CD8-positive, alpha-beta T cell (primary cell): ENCODE measurements at regions of chr17 and their contacts with region 1.

Region 1: DNA sequence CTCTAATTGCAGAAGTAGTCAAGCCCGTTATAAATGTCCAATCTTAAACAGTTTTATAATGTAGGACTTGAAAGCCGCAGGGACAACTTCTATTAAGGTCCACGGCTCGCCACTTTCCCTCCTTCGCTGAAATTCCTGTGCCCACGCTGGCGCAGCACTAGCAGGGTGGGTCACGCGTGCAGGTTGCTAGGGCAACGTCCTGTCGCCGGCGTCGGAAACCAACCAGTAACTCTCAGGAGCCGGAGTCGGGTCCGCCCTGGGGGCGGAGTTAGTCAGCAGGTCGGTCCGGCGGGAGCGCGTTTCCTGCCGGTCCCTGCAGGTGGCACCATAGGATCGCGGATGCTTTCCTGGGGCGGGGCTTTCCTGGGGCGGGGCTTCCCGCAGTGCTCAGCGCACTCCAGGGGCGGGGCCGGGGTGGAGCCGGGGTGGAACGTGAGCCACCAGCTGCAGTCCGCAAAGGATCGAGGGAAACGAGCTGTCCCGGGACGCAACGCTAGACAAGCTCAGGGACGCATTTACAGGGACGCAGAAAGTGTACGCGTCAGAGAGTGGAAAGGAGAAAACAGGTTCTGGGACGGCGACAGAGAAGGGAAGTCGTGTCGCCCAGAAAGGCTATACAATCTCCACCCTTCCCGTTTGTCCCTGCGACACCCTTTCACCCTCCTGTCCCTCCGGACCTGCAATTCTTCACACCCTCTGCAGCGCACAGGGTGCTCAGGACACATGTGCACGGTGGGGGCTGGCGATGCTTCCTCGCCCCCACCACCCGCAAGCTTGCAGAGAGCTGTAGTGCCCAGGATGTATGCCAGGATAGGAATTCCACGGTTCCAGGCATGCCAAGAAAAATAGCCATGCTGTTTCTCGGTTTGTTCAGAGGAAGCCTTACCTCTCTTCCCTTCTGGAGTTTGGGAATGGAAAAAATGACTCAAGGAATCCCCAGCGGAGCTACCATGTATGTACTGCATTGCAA is 12.4 kb downstream of the COPZ2 start:
- DNase-seq: peak; percentile 96 to 99 (median 97)
- ATAC-seq: peak; percentile 91
- H3K4me3 ChIP-seq: peak overlapping the region; percentile 57 to 60
- H3K4me3 Mint-ChIP-seq: peak overlapping the region; percentile 84
- H3K27ac ChIP-seq: peak overlapping the region in 1 of 2 experiments; percentile 48
- H3K27ac Mint-ChIP-seq: peak overlapping the region; percentile 83
- H3K4me1 ChIP-seq: peaks cover 35% of the 10 kb centered on the region
- H3K4me1 Mint-ChIP-seq: peaks cover 23% of the 10 kb centered on the region
- H3K27me3 ChIP-seq: peaks cover 6 to 29% of the 10 kb centered on the region in 2 experiments
- H3K27me3 Mint-ChIP-seq: peaks cover 46% of the 10 kb centered on the region
- CTCF ChIP-seq: peak; percentile 70

Region 2: DNA sequence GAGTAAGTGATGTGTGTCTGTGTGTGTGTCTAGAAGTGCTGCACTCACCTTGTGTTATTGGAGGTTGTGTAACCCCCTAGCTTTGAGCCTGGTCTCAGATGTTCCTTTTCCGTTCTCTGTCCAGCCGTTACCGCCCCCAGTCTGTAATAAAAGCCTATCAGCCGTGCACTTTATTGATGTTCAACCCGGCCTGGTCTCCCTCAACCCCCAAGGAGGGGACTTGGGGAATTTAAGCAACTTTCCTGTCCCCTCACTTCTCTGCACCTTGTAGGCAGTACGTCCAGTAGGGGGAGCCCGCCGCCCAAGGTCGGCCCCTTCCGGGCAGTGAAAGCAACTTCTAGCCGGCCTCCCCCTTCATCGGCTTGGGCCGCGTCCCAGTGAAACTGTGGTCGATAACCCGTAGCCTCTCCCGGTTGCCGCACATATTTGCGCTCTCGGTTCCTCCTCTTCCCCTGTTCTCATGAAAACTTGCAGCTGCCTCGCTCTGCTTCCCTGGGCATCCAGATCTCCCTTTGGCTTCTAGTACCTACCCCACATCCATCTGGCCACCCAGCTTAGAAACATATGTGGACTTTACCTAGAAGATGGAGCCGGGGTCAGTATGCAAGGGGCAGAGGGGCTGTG is 76.0 kb before region 1 on chr17:
- CTCF ChIA-PET with region 1: interaction called, 4 read pairs
- POLR2A ChIA-PET with region 1: no interaction called
- intact Hi-C with region 1: loop called in 1 of 2 experiments (anchors 2 kb)
- DNase-seq: peak; percentile 47 to 88 (median 79)
- ATAC-seq: peak; percentile 53
- H3K4me3 ChIP-seq: peak overlapping the region; percentile 26 to 36
- H3K4me3 Mint-ChIP-seq: peak overlapping the region; percentile 82
- H3K27ac ChIP-seq: peak overlapping the region in 1 of 2 experiments; percentile 28
- H3K27ac Mint-ChIP-seq: peak overlapping the region; percentile 81
- H3K4me1 ChIP-seq: peaks cover 51% of the 10 kb centered on the region
- H3K4me1 Mint-ChIP-seq: peaks cover 46% of the 10 kb centered on the region
- H3K27me3 ChIP-seq: no peaks in the 10 kb centered on the region
- H3K27me3 Mint-ChIP-seq: no peaks in the 10 kb centered on the region
- CTCF ChIP-seq: peak; percentile 78

Region 3: DNA sequence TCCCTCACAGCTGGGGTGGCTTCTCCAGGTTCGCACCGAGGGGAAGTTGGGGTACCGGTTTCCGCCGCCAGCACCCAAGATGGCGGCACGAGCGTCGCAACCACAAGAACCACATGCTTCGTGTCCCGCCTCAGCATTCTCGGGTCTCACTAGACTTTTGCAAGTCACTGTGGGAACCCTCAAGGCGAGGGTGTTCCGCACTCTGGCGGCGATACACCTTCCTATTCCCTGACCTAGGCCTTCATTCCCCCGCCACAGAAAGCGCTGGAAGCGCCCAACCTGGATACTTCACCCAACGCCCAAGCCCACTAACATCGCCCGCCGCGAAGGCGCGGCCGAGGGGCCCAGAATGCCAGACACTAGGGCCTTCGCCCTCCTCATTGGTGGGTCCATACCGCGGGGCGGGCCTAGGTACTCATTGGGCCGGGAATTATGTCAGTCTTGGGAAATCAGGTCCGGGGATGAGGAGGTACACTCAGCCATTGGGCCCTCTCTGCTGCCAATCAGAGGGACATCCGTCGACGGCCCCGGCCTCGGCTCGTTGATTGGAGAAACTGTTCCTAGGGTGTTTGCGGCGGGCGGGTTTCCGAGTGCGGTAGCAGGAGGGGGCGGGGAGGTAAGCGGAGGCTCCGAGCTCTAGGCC is 22.6 kb after region 1 on chr17 and contains the start of gene NFE2L1:
- CTCF ChIA-PET with region 1: interaction called, 20 read pairs
- POLR2A ChIA-PET with region 1: interaction called, 10 read pairs
- intact Hi-C with region 1: loop called (anchors 1 kb)
- DNase-seq: peak; percentile 93 to 99 (median 97)
- ATAC-seq: peak; percentile 96
- H3K4me3 ChIP-seq: peak within 1 kb of the TSS; percentile 69 to 77
- H3K4me3 Mint-ChIP-seq: peak within 1 kb of the TSS; percentile 93
- H3K27ac ChIP-seq: peak within 1 kb of the TSS; percentile 88 to 91
- H3K27ac Mint-ChIP-seq: peak within 1 kb of the TSS; percentile 99
- H3K4me1 ChIP-seq: peaks cover 41% of the 10 kb centered on the region
- H3K4me1 Mint-ChIP-seq: peaks cover 57% of the 10 kb centered on the region
- H3K27me3 ChIP-seq: no peaks in the 10 kb centered on the region
- H3K27me3 Mint-ChIP-seq: no peaks in the 10 kb centered on the region
- CTCF ChIP-seq: no peak
- total RNA-seq, gene NFE2L1: 29.5 to 32.5 TPM

Region 4: DNA sequence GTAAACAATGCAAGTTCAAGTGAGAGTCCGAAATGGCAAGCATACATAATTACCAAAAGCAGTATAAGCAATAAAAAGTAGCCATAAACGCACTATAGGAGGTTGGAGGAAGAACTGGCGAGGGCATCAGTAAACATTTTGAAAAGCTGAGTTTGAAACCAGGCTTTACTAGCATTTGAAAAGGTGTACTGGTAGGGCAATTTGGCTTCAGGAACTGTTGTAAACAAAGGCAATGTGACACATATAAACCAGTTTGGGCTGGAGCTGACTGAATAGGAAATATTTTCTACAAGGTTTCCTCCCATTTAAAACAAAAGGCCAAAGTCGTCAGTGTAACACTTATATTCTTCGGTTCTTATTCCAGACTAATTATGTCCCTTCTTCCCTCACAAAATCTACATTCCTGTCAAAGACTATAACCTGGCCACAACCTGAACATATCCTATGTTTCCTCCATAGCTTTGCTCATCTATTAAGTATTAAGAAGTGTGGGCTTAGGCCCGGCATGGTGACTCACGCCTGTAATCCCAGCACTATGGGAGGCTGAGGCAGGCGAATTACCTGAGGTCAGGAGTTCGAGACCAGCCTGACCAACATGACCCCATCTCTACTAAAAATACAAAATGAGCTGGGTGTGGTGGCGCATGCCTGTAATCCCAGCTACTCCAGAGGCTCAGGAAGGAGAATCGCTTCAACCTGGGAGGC is 68.3 kb after region 1 on chr17:
- CTCF ChIA-PET with region 1: interaction called, 10 read pairs
- POLR2A ChIA-PET with region 1: no interaction called
- intact Hi-C with region 1: no loop called
- DNase-seq: no peak
- ATAC-seq: no peak
- H3K4me3 ChIP-seq: no peak overlapping the region
- H3K4me3 Mint-ChIP-seq: no peak overlapping the region
- H3K27ac ChIP-seq: no peak overlapping the region
- H3K27ac Mint-ChIP-seq: no peak overlapping the region
- H3K4me1 ChIP-seq: no peaks in the 10 kb centered on the region
- H3K4me1 Mint-ChIP-seq: peaks cover 15% of the 10 kb centered on the region
- H3K27me3 ChIP-seq: no peaks in the 10 kb centered on the region
- H3K27me3 Mint-ChIP-seq: no peaks in the 10 kb centered on the region
- CTCF ChIP-seq: no peak

Region 5: DNA sequence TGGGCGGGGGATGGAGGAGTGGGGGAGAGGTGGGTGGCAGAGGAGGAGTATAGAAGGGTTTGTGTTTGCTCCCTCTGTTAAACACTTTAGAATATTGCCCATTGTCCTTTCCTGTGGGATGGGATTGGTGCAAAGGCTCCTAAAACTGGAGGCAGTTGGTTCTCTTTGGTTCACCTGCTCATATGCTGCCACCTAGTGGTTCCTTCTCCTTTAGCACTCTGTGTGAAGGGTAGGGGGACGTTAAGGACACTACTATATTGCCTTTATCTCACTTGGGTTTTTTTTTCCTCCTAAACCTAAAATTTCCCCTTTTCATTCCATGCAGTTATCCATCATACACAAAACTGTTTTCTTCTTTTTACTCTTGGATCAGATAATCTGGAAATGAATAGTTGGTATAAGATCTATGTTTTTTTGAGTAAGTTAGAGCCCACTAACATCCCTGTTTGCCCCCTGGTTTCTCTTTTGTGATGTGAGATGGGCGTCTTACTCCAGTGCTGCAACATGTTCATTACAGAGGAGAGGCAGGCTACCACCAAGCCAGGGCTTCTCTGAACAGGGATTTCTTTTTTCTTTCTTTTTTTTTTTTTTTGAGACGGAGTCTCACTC is 106.1 kb after region 1 on chr17:
- CTCF ChIA-PET with region 1: interaction called, 18 read pairs
- POLR2A ChIA-PET with region 1: interaction called, 3 read pairs
- intact Hi-C with region 1: loop called (anchors 1 kb)
- DNase-seq: peak in 8 of 9 experiments; percentile 29 to 78 (median 55)
- ATAC-seq: peak; percentile 83
- H3K4me3 ChIP-seq: no peak overlapping the region
- H3K4me3 Mint-ChIP-seq: no peak overlapping the region
- H3K27ac ChIP-seq: no peak overlapping the region
- H3K27ac Mint-ChIP-seq: no peak overlapping the region
- H3K4me1 ChIP-seq: no peaks in the 10 kb centered on the region
- H3K4me1 Mint-ChIP-seq: no peaks in the 10 kb centered on the region
- H3K27me3 ChIP-seq: no peaks in the 10 kb centered on the region
- H3K27me3 Mint-ChIP-seq: no peaks in the 10 kb centered on the region
- CTCF ChIP-seq: peak; percentile 83

Region 6: GRCh38 chr17:48194097-48194550 is 168.9 kb after region 1 on chr17:
- CTCF ChIA-PET with region 1: no interaction called
- POLR2A ChIA-PET with region 1: no interaction called
- intact Hi-C with region 1: no loop called
- DNase-seq: peak in 2 of 9 experiments; percentile 9 to 34
- ATAC-seq: peak; percentile 49
- H3K4me3 ChIP-seq: no peak overlapping the region
- H3K4me3 Mint-ChIP-seq: no peak overlapping the region
- H3K27ac ChIP-seq: no peak overlapping the region
- H3K27ac Mint-ChIP-seq: peak overlapping the region; percentile 18
- H3K4me1 ChIP-seq: peaks cover 14% of the 10 kb centered on the region
- H3K4me1 Mint-ChIP-seq: peaks cover 47% of the 10 kb centered on the region
- H3K27me3 ChIP-seq: no peaks in the 10 kb centered on the region
- H3K27me3 Mint-ChIP-seq: no peaks in the 10 kb centered on the region
- CTCF ChIP-seq: no peak

Region 7: GRCh38 chr17:48618256-48618897 is 593.2 kb after region 1 on chr17:
- CTCF ChIA-PET with region 1: interaction called, 7 read pairs
- POLR2A ChIA-PET with region 1: interaction called, 3 read pairs
- intact Hi-C with region 1: loop called (anchors 1 kb)
- DNase-seq: peak; percentile 66 to 90 (median 85)
- ATAC-seq: peak; percentile 72
- H3K4me3 ChIP-seq: no peak overlapping the region
- H3K4me3 Mint-ChIP-seq: peak overlapping the region; percentile 42
- H3K27ac ChIP-seq: no peak overlapping the region
- H3K27ac Mint-ChIP-seq: no peak overlapping the region
- H3K4me1 ChIP-seq: peaks cover 35% of the 10 kb centered on the region
- H3K4me1 Mint-ChIP-seq: peaks cover 33% of the 10 kb centered on the region
- H3K27me3 ChIP-seq: peaks cover 64 to 70% of the 10 kb centered on the region in 2 experiments
- H3K27me3 Mint-ChIP-seq: peaks cover 86% of the 10 kb centered on the region
- CTCF ChIP-seq: peak; percentile 98